ENCODE measurements at regions of chr2 and their contacts with region 1.

Region 1: GRCh38 chr2:119234377-119235019 is 10.9 kb downstream of the STEAP3 start:
- DNase-seq: no peak
- H3K4me3 ChIP-seq: no peak overlapping the region
- CTCF ChIP-seq: peak; percentile 44

Region 2: DNA sequence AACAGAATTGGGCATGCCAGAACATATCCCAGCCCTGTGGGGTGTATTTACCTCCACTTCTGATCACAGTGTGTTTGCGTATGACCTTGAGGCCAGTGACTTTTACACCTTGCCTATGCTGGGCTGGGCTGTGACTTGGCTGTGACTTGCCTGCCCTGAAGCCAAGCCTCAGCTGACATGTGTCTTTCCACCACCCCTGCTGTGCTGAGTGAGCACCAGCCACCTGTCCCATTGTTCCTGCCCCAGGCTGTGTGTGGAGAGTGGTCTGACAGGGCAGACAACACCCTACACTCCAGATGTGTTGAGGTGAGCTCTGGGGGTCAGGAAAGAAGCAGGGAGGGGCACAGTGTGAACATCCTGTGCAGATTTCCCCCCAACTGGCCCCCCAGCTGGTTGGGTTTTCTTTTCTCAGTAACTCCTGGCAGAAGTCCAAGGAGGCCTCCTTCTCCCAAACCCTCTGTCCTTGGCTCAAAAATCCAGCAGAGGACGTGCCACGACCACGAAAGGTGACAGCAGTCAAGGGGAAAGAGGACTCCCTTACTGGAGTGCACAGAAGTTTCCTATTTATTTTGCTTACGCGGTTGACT is 15.9 kb before region 1 on chr2:
- CTCF ChIA-PET with region 1: interaction called, 18 read pairs
- POLR2A ChIA-PET with region 1: no interaction called
- DNase-seq: no peak
- H3K4me3 ChIP-seq: no peak overlapping the region
- CTCF ChIP-seq: peak; percentile 73

Region 3: DNA sequence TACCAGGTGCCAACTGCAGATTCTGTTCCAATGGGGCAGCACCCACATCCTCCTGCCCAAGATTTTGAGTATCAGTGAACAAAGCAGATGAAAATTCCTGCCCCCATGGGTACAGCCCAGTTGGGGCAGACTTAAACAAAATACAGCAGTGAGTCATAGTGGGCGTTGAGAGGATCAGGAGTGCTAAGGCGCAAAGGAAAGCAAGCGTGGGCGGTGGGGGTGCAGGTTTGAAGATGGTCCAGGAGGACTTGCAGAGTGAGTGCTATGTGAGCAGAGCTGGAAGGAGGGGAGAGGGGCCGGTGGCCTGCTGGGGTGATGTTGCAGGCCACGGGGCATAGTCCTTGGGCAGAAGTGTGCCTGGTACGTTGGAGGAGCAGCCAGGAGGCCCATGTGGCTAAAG is 13.8 kb after region 1 on chr2:
- CTCF ChIA-PET with region 1: interaction called, 21 read pairs
- POLR2A ChIA-PET with region 1: interaction called, 8 read pairs
- DNase-seq: no peak
- H3K4me3 ChIP-seq: no peak overlapping the region
- CTCF ChIP-seq: no peak

Measured in AG04449 (cell line).